K562 (cell line): ENCODE measurements at regions of chr22 and their contacts with region 1.

Region 1: GRCh38 chr22:20174785-20175596 is 24.1 kb upstream of the CCDC188 start:
- DNase-seq: peak in 2 of 4 experiments; percentile 63 to 73
- ATAC-seq: peak; percentile 81
- H3K4me3 ChIP-seq: no peak overlapping the region
- H3K27ac ChIP-seq: no peak overlapping the region
- H3K4me1 ChIP-seq: peaks cover 0 to 57% of the 10 kb centered on the region in 2 experiments; a peak in 1 of 5 replicates
- H3K27me3 ChIP-seq: peaks cover 83 to 98% of the 10 kb centered on the region in 2 experiments; a peak in 4 of 5 replicates
- CTCF ChIP-seq: peak; percentile 68 to 86 (median 74)
- EP300 ChIP-seq: no peak
- POLR2A ChIP-seq: no peak
- RAD21 ChIP-seq: peak in 1 of 2 experiments; percentile 87; a peak in 2 of 4 replicates

Region 2: GRCh38 chr22:20146777-20147176 is 28.2 kb before region 1 on chr22:
- CTCF ChIA-PET with region 1: no interaction called
- POLR2A ChIA-PET with region 1: no interaction called
- in situ Hi-C with region 1: no loop called
- intact Hi-C with region 1: no loop called
- DNase-seq: peak in 2 of 4 experiments; percentile 66 to 75
- ATAC-seq: peak; percentile 27; the same call in 2 of the 3 replicates
- H3K4me3 ChIP-seq: no peak overlapping the region
- H3K27ac ChIP-seq: no peak overlapping the region
- H3K4me1 ChIP-seq: peaks cover 0 to 80% of the 10 kb centered on the region in 2 experiments; a peak in 2 of 5 replicates
- H3K27me3 ChIP-seq: peaks cover 0 to under 1% of the 10 kb centered on the region in 2 experiments; a peak in 2 of 5 replicates
- CTCF ChIP-seq: 0 out of 6 replicates have a peak, but pooled peaks of 1 of the 3 experiments have one; percentile 4
- EP300 ChIP-seq: no peak
- POLR2A ChIP-seq: no peak
- RAD21 ChIP-seq: no peak

Region 3: GRCh38 chr22:20238536-20238900 is 63.5 kb after region 1 on chr22:
- CTCF ChIA-PET with region 1: interaction called, 3 read pairs
- POLR2A ChIA-PET with region 1: interaction called, 4 read pairs
- in situ Hi-C with region 1: no loop called
- intact Hi-C with region 1: loop called (anchors 2 kb)
- DNase-seq: peak; percentile 89 to 99 (median 98)
- ATAC-seq: peak; percentile 91
- H3K4me3 ChIP-seq: no peak overlapping the region
- H3K27ac ChIP-seq: no peak overlapping the region
- H3K4me1 ChIP-seq: peaks cover 7 to 86% of the 10 kb centered on the region in 2 experiments; a peak in 3 of 5 replicates
- H3K27me3 ChIP-seq: peaks cover 43 to 98% of the 10 kb centered on the region in 2 experiments
- CTCF ChIP-seq: peak; percentile 98 to 99 (median 99)
- EP300 ChIP-seq: no peak
- POLR2A ChIP-seq: no peak
- RAD21 ChIP-seq: peak in 1 of 2 experiments; percentile 97; a peak in 2 of 4 replicates

Region 4: DNA sequence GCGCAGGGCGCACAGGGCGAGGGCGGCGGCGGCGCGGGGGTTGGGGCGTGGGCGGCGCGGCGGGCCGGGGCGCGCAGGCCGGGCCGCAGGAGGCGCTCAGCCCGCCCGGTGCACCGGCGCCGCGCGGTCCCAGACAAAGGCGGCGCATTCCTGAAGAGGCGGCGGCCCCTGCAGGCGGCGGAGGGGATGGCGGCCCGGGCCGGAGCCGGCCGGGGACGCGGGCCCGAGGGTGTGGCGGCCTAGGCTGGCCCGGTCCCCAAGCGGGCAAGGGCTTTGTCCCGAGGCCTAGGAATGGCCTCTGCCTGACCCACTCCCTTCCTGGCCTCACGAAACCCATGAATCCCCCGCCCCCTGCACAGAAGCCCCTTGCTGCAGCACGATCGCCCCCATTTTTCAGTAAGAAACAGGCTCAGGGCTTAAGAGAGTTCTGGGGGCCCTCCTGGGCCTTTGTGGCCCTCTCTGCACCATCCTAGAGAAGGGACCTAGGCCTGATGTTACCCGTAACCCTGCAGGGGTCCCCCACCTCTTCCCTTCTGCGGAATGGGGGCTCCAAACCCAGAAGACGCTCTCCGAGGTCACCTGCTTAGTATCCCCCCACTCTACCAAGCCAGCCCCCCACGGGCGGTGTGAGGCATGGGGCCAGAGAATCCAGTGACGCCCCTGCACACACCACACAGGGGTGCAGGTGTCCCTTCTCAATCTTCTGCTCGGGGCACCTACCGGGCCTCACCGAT is 93.5 kb after region 1 on chr22 and contains the start of gene RTN4R:
- CTCF ChIA-PET with region 1: no interaction called
- POLR2A ChIA-PET with region 1: no interaction called
- in situ Hi-C with region 1: no loop called
- intact Hi-C with region 1: loop called (anchors 5 kb)
- DNase-seq: peak; percentile 93 to 99 (median 96)
- ATAC-seq: peak; percentile 90
- H3K4me3 ChIP-seq: peak within 1 kb of the TSS; percentile 48
- H3K27ac ChIP-seq: no peak within 1 kb of the TSS
- H3K4me1 ChIP-seq: peaks cover 4 to 69% of the 10 kb centered on the region in 2 experiments; a peak in 4 of 5 replicates
- H3K27me3 ChIP-seq: peaks cover 19 to 69% of the 10 kb centered on the region in 2 experiments; a peak in 4 of 5 replicates
- CTCF ChIP-seq: peak; percentile 87 to 99 (median 98)
- EP300 ChIP-seq: peak; percentile 52
- POLR2A ChIP-seq: no peak
- RAD21 ChIP-seq: peak; percentile 98 to 99
- polyA plus RNA-seq, gene RTN4R: 0.04 TPM in 1 of 2 experiments, not detected in the other